Calu3 (cell line): ENCODE measurements at regions of chr2 and their contacts with region 1.

Region 1: DNA sequence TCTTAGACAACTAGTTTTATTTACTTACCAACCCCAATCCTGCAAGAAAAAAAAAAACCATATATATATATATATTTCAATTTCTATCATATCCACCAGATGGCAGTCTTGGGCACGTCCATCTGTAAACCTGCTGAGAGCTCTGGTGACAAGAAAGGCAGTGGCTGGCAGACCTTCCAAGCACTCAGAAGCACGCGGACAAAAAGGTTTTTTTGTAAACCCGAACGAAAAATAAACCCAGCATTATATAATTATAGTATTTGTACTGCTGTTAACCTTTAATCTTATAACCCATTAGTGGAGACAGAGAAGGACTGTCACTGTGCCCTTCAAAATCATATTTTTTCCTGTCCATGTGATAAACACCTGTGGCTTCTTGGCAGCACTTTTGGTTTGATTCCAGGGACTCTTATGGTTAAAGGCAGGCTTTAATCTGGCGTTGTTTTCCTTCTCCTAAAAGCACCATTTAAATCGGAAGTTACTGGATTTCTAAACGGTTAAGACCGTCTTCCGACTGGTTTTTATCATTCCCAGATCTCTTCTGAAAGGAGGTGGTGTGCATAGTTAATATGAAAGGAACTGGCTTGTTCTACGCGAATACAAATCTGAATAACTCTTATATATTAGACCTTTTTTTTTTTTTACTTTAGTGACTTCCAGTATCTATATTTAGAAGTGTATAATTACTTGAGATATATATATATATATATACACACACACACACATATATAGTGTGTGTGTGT is 31.0 kb upstream of the SLC3A1 start:
- DNase-seq: peak; percentile 60
- H3K4me3 Mint-ChIP-seq: peak overlapping the region; percentile 59
- H3K27ac Mint-ChIP-seq: peak overlapping the region; percentile 87
- H3K4me1 Mint-ChIP-seq: peaks cover 46% of the 10 kb centered on the region
- H3K27me3 Mint-ChIP-seq: no peaks in the 10 kb centered on the region
- CTCF ChIP-seq: peak; percentile 47

Region 2: DNA sequence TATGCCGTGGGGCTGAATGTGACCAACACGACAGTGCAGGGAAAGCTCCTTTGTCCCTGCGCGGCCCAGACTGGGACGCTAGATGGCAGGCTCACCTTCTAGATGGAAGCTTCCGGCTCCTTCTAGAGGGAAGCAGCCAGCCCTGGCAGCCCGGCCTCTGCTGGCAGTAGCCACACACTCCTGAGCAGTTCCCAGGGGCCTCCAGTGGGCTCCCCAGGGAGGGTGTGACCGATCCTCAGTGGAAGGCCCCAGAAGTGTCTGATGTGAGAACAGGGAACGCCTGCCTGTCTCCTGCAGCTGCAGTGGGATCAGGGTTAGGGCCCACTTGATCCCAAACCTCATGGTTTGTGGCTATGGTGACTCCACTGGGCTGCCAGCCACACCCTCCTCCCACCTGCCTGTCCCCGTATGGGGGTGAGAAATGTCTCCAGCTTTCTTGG is 200.0 kb before region 1 on chr2:
- CTCF ChIA-PET with region 1: interaction called, 11 read pairs
- intact Hi-C with region 1: loop called (anchors 2 kb)
- DNase-seq: peak; percentile 90
- H3K4me3 Mint-ChIP-seq: no peak overlapping the region
- H3K27ac Mint-ChIP-seq: no peak overlapping the region
- H3K4me1 Mint-ChIP-seq: no peaks in the 10 kb centered on the region
- H3K27me3 Mint-ChIP-seq: no peaks in the 10 kb centered on the region
- CTCF ChIP-seq: peak; percentile 86

Region 3: DNA sequence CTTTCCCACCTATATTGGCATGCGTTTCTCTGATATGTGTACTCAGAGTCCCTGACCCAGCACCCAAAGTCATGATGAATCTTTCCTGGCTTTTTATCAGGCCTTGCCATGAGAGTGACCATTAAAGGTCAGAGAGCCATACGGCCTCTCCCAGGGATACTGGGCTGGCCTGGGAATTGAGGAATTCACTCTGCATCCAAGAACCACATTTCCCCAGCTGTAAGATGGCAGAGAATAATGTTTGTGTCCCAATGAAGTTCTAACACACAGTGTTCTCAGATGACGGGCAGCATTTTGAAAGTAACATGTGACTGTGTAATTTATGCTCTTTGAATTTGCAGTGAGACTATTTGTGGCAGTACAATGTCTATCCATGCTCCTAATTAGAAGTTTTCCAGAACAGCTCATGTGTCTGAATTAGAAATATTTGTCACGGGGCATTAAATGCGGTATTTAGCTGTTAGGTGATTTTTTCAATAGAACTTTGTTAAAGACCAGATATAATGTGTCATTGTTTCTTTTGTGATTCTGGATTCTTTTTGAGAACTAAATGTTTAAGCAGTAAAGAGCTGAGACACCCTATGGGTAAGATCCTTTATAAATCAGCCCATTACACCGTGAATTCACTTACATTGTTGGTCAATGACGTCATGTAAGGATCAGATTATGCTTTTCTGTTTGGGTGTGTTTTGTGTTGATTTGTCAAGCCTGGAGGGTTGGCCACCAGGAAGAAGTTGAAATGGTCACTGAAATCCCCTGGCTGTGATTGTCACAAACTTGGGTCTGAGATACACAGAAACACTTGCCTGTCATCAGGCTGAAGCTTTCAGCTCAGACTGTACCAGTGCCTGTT is 23.7 kb after region 1 on chr2:
- CTCF ChIA-PET with region 1: interaction called, 3 read pairs
- intact Hi-C with region 1: loop called (anchors 2 kb)
- DNase-seq: peak; percentile 32
- H3K4me3 Mint-ChIP-seq: no peak overlapping the region
- H3K27ac Mint-ChIP-seq: peak overlapping the region; percentile 41
- H3K4me1 Mint-ChIP-seq: peaks cover 46% of the 10 kb centered on the region
- H3K27me3 Mint-ChIP-seq: no peaks in the 10 kb centered on the region
- CTCF ChIP-seq: no peak

Region 4: DNA sequence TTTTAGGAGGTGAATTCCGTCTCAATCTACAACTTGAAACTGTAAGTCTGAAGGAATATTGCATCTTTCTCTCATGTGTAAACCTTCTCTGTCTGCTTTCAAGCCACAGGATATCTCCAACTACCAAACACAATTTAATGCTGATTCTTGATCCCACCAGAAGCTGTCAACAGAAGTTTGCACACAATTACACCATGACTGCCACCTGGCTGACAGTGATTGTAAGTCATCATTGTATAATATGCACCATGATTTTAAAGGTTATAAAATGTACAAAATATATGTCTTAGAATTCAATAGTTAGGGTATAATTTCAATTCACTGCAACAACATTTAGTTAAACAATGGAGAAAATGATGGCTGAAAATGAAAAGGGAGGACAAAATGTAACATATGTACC is 98.6 kb after region 1 on chr2:
- CTCF ChIA-PET with region 1: interaction called, 4 read pairs
- intact Hi-C with region 1: loop called (anchors 1 kb)
- DNase-seq: peak; percentile 24
- H3K4me3 Mint-ChIP-seq: no peak overlapping the region
- H3K27ac Mint-ChIP-seq: no peak overlapping the region
- H3K4me1 Mint-ChIP-seq: no peaks in the 10 kb centered on the region
- H3K27me3 Mint-ChIP-seq: no peaks in the 10 kb centered on the region
- CTCF ChIP-seq: no peak

Region 5: DNA sequence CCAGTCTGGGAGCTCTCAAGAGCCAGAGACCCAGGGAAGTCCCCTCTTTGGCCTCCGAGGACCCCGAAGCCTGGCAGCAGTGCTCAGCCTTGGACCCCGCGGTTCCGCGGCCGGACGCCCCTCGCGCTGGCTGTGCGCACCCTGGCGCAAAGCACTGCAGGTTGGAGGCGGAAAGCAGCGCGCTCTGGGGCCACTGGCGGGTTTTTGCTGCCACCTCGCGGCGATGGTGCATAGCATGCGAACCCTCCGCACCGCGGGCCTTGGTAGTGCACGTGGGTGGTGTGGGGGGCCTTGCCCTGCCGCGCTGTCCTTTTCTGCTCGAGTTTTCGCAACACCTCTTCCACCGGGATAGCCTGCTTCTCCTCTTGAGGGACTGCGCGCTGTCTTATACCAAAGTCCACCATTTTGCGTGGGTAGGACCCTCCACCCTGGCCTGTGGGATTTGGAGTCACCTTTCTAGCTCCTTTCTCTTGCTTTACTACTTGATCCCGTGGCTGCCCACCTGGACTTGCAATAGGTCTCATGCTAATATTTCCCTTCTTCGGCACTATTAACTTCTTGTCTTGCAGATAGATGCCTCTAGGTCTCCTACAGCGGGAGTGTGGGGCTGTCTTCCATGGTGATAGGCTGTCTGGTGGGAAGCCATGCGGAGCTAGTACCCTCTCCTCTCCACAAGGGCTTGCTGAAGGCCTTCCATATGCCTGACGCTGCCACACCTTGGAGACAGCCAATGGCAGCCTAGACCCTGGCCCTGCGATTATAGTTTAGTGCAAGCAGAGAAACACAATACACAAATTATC is 711.5 kb after region 1 on chr2:
- CTCF ChIA-PET with region 1: no interaction called
- intact Hi-C with region 1: loop called (anchors 10 kb)
- DNase-seq: peak; percentile 86
- H3K4me3 Mint-ChIP-seq: peak overlapping the region; percentile 78
- H3K27ac Mint-ChIP-seq: no peak overlapping the region
- H3K4me1 Mint-ChIP-seq: peaks cover 7% of the 10 kb centered on the region
- H3K27me3 Mint-ChIP-seq: peaks cover 89% of the 10 kb centered on the region
- CTCF ChIP-seq: peak; percentile 82